Calu3 (cell line): ENCODE measurements at regions of chr4 and their contacts with region 1.

Region 1: GRCh38 chr4:113394730-113395530 is 345.5 kb downstream of the ANK2 start:
- DNase-seq: peak; percentile 53
- H3K4me3 Mint-ChIP-seq: no peak overlapping the region
- H3K27ac Mint-ChIP-seq: no peak overlapping the region
- H3K4me1 Mint-ChIP-seq: no peaks in the 10 kb centered on the region
- H3K27me3 Mint-ChIP-seq: no peaks in the 10 kb centered on the region
- CTCF ChIP-seq: peak; percentile 55

Region 2: GRCh38 chr4:113316879-113317278 is 78.1 kb before region 1 on chr4:
- CTCF ChIA-PET with region 1: no interaction called
- intact Hi-C with region 1: no loop called
- DNase-seq: no peak
- H3K4me3 Mint-ChIP-seq: no peak overlapping the region
- H3K27ac Mint-ChIP-seq: no peak overlapping the region
- H3K4me1 Mint-ChIP-seq: no peaks in the 10 kb centered on the region
- H3K27me3 Mint-ChIP-seq: no peaks in the 10 kb centered on the region
- CTCF ChIP-seq: no peak

Region 3: DNA sequence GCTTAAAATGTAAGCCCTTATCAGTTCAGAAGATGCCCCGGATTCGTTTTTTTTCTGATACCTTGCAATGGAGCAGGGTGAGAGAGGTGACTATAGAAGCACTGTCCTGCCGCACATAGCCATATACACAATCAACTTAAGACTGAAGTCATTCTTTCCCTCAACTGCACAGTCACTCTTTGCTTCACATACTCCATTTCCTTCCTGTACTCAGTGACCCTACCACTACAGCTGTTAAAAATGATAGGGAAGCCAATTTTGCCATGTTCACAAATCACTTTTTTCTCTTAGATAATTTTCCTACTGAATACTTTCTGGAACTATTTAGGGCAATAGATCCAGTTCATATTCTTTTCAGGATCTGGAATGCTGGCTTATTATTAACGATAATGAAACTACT is 45.5 kb before region 1 on chr4:
- CTCF ChIA-PET with region 1: no interaction called
- intact Hi-C with region 1: no loop called
- DNase-seq: no peak
- H3K4me3 Mint-ChIP-seq: no peak overlapping the region
- H3K27ac Mint-ChIP-seq: no peak overlapping the region
- H3K4me1 Mint-ChIP-seq: no peaks in the 10 kb centered on the region
- H3K27me3 Mint-ChIP-seq: peaks cover 19% of the 10 kb centered on the region
- CTCF ChIP-seq: no peak

Region 4: GRCh38 chr4:113534711-113535110 is 139.8 kb after region 1 on chr4:
- CTCF ChIA-PET with region 1: no interaction called
- intact Hi-C with region 1: loop called (anchors 5 kb)
- DNase-seq: no peak
- H3K4me3 Mint-ChIP-seq: no peak overlapping the region
- H3K27ac Mint-ChIP-seq: no peak overlapping the region
- H3K4me1 Mint-ChIP-seq: no peaks in the 10 kb centered on the region
- H3K27me3 Mint-ChIP-seq: no peaks in the 10 kb centered on the region
- CTCF ChIP-seq: no peak

Region 5: GRCh38 chr4:113761620-113762185 is 366.8 kb after region 1 on chr4 and contains the start of gene CAMK2D:
- CTCF ChIA-PET with region 1: interaction called, 3 read pairs
- intact Hi-C with region 1: loop called (anchors 5 kb)
- DNase-seq: peak; percentile 79
- H3K4me3 Mint-ChIP-seq: peak within 1 kb of the TSS; percentile 93
- H3K27ac Mint-ChIP-seq: peak within 1 kb of the TSS; percentile 99
- H3K4me1 Mint-ChIP-seq: peaks cover 30% of the 10 kb centered on the region
- H3K27me3 Mint-ChIP-seq: no peaks in the 10 kb centered on the region
- CTCF ChIP-seq: no peak
- total RNA-seq, gene CAMK2D: 22.1 and 28.3 TPM in 2 replicates

Region 6: DNA sequence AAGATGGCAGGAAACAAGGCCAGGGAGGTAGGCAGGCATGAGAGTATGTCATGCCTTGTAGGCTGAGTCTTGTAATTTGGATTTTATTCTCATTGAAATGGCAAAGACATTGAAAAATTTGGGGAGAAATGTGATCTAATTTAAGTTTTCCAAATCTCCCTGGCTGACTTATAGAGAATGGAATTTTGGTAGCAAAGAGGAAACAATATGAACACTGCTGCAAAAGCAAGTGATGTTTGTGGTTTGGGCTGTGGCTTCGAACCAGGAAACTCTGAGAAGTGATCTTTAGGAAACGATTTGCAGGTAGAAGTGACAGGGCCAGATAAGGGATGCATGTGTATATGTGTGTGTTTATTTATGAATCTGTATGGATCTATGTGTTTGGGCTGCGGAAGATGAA is 548.9 kb after region 1 on chr4:
- CTCF ChIA-PET with region 1: no interaction called
- intact Hi-C with region 1: loop called (anchors 5 kb)
- DNase-seq: no peak
- H3K4me3 Mint-ChIP-seq: no peak overlapping the region
- H3K27ac Mint-ChIP-seq: no peak overlapping the region
- H3K4me1 Mint-ChIP-seq: peaks cover 22% of the 10 kb centered on the region
- H3K27me3 Mint-ChIP-seq: no peaks in the 10 kb centered on the region
- CTCF ChIP-seq: no peak

Region 7: DNA sequence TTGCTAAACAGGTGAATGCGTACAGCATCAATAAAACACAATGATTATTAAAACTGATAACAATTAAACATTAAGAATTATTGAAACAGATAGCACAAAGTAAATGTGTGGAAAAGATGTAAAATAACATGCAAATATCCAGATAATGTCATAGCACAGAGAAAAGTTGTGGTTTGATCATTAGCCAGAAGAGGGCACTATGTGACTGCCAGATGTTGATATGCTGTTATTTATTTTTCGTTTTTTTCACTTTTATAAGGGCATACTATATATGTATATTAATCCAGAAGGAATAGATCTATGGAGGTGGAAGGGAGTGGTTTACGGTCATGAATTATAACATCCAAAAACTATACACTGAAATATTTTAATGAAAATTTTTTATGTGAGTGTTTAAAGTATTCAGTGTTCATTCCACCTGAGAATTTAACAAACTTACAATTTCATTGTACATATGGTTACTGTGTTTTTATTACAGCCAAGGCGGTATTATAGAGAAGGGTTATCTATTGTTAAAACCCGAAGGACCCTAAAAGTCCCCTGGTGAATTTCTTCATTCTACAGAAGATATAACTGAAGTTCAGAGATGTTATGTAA is 991.8 kb after region 1 on chr4:
- CTCF ChIA-PET with region 1: no interaction called
- intact Hi-C with region 1: loop called (anchors 5 kb)
- DNase-seq: peak; percentile 7
- H3K4me3 Mint-ChIP-seq: no peak overlapping the region
- H3K27ac Mint-ChIP-seq: no peak overlapping the region
- H3K4me1 Mint-ChIP-seq: no peaks in the 10 kb centered on the region
- H3K27me3 Mint-ChIP-seq: no peaks in the 10 kb centered on the region
- CTCF ChIP-seq: peak; percentile 38